HEK293 (cell line): ENCODE measurements at regions of chr17 and their contacts with region 1.

Region 1: DNA sequence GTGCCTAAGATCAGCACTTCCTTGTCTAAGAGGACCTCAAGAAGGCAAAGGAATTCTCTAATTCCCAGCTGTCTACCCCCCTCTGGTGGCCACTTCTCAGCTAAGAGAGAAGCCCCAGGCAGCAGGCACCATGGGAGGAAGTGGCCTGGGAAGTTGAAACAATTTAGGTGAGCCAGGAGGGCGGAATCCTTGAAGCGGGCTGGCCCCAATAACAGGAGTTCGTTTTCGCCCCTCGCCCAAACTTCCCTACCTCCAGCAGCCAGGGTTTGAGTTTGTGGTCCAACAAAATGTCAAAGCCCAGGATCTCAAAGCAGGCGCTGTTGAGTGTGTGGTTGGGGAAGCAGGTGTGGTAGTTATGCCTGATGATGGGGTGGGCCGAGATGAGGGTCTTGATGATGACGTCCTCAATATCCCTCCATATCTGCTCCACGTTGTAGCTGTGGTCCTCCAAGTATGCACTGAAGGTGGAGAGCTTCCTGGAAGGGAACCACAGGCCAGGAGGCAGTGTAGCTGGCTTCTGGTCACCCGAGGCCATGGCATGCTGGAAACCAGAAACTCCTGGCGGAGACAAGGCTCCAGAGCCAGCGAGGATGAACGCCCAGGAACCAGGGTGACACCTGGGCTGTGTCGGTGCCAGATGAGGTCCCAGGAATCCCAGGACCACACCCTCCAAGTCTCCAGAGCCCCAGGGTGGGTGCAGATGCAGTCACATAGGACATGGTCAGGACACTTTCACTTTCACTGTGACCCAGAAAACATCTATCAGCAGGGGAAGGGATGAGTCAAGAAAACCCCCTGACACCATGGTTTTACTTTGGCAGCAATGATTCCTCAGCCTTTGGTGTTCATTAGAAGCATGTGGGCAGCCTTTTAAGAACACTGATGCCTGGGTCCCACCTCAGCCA is 25.6 kb downstream of the TTLL6 start:
- H3K4me3 ChIP-seq: no peak overlapping the region
- H3K27ac ChIP-seq: no peak overlapping the region
- H3K4me1 ChIP-seq: no peaks in the 10 kb centered on the region
- CTCF ChIP-seq: peak; percentile 70; the same call in 1 of the 2 replicates

Region 2: DNA sequence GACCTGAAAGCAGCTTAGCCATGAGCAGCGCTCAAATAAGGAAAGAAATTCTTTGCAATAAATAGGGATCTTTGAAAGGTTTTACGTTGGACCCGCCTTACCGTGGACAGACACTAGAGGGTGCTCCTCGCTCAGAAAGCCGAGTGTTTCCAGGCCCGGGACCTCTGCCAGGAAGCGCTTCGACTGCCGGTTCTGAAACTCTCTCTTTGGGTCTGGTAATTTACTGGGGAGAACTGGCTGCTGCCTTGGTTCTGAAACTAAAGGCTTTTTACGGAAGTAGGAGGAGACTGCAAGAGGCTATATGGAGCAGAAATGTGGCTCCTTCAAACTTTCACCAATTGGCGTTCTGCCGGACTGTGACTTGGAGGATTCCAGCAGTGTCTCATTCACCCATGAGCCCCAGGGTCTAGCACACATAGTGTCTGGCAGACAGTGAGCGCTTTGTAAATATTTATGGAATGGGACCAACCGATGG is 119.6 kb before region 1 on chr17:
- CTCF ChIA-PET with region 1: interaction called, 299 read pairs
- POLR2A ChIA-PET with region 1: no interaction called
- H3K4me3 ChIP-seq: peak overlapping the region; percentile 8
- H3K27ac ChIP-seq: no peak overlapping the region
- H3K4me1 ChIP-seq: no peaks in the 10 kb centered on the region
- CTCF ChIP-seq: peak; percentile 71

Region 3: GRCh38 chr17:48756830-48757251 is 34.5 kb before region 1 on chr17:
- CTCF ChIA-PET with region 1: interaction called, 11 read pairs
- POLR2A ChIA-PET with region 1: no interaction called
- H3K4me3 ChIP-seq: no peak overlapping the region
- H3K27ac ChIP-seq: no peak overlapping the region
- H3K4me1 ChIP-seq: no peaks in the 10 kb centered on the region
- CTCF ChIP-seq: no peak

Region 4: DNA sequence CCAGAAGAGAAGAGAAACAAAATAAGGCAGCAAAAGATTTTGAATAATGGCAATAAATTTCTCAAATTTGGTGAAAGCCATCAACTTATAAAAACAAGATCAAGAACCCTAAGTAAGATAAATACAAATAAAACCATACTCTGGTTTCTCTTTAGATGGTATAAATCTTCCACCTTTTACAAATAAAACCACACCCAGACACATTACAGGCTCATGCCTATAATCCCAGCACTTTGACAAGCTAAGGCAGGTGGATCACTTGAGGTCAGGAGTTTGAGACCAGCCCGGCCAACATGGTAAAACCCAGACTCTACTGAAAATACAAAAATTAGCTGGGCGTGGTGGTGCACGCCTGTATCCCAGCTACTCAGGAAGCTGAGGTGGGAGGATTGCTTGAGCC is 18.1 kb before region 1 on chr17:
- CTCF ChIA-PET with region 1: interaction called, 35 read pairs
- POLR2A ChIA-PET with region 1: no interaction called
- H3K4me3 ChIP-seq: no peak overlapping the region
- H3K27ac ChIP-seq: no peak overlapping the region
- H3K4me1 ChIP-seq: no peaks in the 10 kb centered on the region
- CTCF ChIP-seq: no peak

Region 5: GRCh38 chr17:48816774-48817590 is 25.6 kb after region 1 on chr17 and contains the start of gene TTLL6:
- CTCF ChIA-PET with region 1: interaction called, 10 read pairs
- POLR2A ChIA-PET with region 1: no interaction called
- H3K4me3 ChIP-seq: peak within 1 kb of the TSS; percentile 43
- H3K27ac ChIP-seq: no peak within 1 kb of the TSS; the same call in 1 of the 2 replicates
- H3K4me1 ChIP-seq: peaks cover 4% of the 10 kb centered on the region
- CTCF ChIP-seq: peak; percentile 44; the same call in 1 of the 2 replicates